ENCODE measurements at regions of chr22 and their contacts with region 1.

Region 1: GRCh38 chr22:20741634-20742581 is 32.0 kb upstream of the SERPIND1 start:
- DNase-seq: peak; percentile 39 to 57 (median 49)
- H3K4me3 ChIP-seq: no peak overlapping the region
- H3K27ac ChIP-seq: no peak overlapping the region
- H3K4me1 ChIP-seq: peaks cover 0 to 21% (median 16%) of the 10 kb centered on the region in 4 experiments
- H3K27me3 ChIP-seq: no peaks in the 10 kb centered on the region

Region 2: GRCh38 chr22:20568989-20569769 is 172.7 kb before region 1 on chr22:
- CTCF ChIA-PET with region 1: interaction called, 11 read pairs
- POLR2A ChIA-PET with region 1: no interaction called
- DNase-seq: peak; percentile 48 to 83 (median 77)
- H3K4me3 ChIP-seq: peak overlapping the region in 1 of 7 experiments; percentile 26
- H3K27ac ChIP-seq: no peak overlapping the region
- H3K4me1 ChIP-seq: peaks cover 0 to 22% (median 7%) of the 10 kb centered on the region in 4 experiments
- H3K27me3 ChIP-seq: no peaks in the 10 kb centered on the region

Region 3: DNA sequence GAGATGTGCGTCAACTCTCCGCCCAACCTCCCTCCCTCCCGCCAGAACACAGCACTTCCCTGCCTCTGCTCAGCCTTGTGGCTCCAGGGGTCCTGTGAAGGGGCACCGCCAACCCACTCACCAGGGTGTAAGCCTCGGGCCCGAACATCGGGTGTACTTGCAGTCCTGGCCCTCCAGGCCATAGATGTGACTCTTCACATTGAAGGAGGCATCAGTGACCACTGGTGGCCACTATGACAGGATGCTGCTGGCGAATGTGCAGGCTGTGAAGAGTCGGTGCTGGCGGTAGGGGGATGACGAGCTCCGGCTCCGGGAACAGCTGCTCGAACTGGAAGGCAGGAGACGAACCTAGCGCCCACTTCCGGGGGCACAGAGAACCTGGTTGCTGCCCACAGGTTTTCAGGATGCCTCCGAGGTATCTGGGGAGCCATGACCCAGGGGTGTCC is 137.1 kb before region 1 on chr22:
- CTCF ChIA-PET with region 1: interaction called, 11 read pairs
- POLR2A ChIA-PET with region 1: interaction called, 3 read pairs
- DNase-seq: no peak
- H3K4me3 ChIP-seq: no peak overlapping the region
- H3K27ac ChIP-seq: no peak overlapping the region
- H3K4me1 ChIP-seq: peaks cover 0 to 4% (median 3%) of the 10 kb centered on the region in 4 experiments
- H3K27me3 ChIP-seq: no peaks in the 10 kb centered on the region

Region 4: DNA sequence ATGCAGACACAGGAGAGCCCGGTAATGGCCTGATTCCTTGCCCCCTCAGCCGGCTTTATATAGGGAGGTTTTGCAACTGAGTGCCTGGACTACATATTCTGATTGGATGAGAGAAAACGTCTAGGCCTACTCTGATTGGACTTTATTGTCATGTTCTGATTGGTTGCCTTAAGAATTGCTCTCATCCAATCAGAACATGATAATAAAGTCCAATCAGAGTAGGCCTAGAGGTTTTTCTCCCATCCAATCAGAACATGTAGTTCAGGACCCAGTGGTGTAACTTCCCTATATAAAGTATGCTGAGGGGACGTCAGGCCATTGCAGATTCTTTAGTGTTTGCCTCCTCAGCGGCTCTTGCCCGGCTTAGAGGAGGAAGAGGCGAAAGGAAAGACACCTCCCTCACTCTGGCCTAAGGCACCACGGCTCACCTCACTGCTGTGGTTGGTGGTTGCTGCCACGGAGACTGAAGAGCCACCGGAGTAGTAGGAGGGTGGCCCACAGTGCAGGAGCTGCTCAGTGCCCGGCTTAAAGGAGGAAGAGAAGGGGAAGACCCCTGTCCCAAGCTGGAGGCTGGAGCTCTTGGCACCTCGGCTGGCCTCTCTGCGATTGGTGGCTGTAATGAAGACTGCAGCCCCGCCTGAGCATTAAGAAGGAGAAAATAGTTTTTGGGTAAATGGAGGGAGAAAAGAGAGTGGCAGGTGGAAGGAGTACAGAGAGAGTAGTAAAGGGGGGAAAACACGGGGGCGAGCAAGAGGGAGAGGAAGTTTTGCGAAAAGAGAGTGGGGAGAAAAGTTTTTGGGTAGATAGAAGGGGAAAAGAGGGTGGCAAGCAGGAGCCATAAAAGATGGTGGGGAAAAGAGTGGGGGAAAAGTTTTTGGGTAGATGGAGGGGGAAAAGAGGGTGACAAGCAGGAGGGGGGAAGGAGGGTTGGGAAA is 84.7 kb before region 1 on chr22:
- CTCF ChIA-PET with region 1: no interaction called
- POLR2A ChIA-PET with region 1: no interaction called
- DNase-seq: peak in 2 of 3 donors; percentile 13 to 26
- H3K4me3 ChIP-seq: no peak overlapping the region
- H3K27ac ChIP-seq: no peak overlapping the region
- H3K4me1 ChIP-seq: no peaks in the 10 kb centered on the region
- H3K27me3 ChIP-seq: peaks cover 2 to 24% (median 6%) of the 10 kb centered on the region in 5 experiments